ENCODE measurements at regions of chr16 and their contacts with region 1.

Region 1: GRCh38 chr16:53054670-53055485 is at the start of gene CHD9:
- DNase-seq: peak; percentile 71
- H3K4me3 Mint-ChIP-seq: peak within 1 kb of the TSS; percentile 89
- H3K27ac Mint-ChIP-seq: peak within 1 kb of the TSS; percentile 84
- H3K4me1 Mint-ChIP-seq: peaks cover 25% of the 10 kb centered on the region
- H3K27me3 Mint-ChIP-seq: no peaks in the 10 kb centered on the region
- total RNA-seq, gene CHD9: 17.0 and 18.3 TPM in 2 replicates

Region 2: DNA sequence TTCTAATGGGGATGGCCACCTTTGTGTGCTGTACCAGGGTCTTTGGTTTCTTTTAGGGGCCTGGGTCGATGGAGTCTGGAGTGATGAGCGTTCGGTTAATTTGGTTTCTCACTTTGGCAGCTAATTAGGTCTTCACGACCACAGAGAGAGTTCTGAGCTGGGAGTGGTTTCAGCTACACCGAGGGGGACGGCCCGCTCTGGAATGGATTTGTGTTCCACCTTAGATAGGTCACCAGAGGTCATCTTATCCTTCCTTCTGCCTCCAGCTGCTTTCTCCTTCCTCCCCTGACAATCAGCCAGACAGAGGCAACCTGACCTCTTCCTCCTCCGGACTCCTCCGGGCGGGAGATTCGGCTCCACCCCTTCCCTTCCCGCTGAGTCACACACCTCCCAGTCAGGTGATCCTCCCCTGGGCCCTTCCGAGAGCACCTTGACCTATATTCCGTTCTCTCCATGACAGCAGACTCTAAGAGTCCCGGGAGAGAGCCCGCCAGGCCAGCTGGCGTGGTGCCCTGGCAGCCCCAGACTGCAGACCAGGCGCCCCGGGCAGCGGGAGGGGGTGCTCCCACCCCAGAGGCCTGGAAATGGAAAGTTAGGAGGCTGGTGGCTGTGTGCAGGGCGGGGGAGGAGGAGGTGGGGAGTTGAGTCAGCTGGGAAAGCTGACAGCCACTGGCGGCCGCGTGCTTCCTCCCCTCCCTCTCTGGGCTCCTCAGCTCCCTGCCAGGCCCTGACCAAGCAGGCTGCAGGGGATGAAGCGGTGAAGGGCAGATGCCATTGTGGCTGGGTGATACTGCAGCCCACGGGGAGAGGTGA is 44.6 kb after region 1 on chr16:
- intact Hi-C with region 1: loop called (anchors 2 kb)
- DNase-seq: peak; percentile 52
- H3K4me3 Mint-ChIP-seq: peak overlapping the region; percentile 79
- H3K27ac Mint-ChIP-seq: peak overlapping the region; percentile 93
- H3K4me1 Mint-ChIP-seq: peaks cover 36% of the 10 kb centered on the region
- H3K27me3 Mint-ChIP-seq: no peaks in the 10 kb centered on the region

Region 3: DNA sequence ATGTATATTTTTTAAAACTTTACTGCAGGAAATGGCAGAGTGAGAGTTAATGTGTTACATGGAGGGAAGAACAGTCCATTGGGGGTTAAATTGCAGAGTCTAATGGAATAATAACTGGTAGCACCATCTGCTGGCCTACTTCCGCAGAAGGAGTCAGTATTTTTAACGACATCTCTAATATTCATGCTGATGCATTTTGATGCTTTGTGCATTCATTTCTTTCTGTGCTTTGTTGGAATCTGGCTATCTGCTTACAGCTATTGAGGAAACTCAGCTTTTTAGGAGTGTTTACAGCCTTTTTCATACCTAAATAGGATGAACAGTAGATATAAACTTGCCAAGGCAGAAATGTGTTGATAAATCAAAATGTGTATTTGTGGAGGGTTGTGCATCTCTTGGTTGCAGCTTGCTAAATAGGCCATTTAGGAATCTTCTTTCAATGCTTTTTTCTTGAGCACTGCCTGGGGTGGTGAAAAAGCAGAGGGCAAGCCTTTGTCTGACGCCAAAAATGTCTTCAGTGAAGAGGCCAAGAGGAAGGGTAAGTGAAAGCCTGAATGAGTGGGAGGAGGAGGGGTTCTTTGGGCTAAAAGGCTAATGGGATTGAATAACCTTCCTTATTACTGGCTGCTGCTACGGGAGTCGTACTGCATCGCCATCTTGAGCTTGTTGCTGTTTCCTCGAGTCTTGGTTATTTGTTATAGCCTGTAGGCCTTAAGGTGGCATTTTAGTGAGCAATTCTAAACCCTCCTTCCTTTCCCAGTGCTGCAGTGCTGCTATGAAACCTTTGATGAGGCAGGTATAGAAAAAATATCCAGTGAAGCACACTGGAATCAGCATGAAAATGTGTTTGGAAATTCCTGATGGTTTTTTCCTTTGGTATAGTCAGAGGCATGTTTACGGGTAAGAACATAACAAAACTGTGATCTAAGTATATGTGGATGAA is 153.2 kb after region 1 on chr16:
- intact Hi-C with region 1: loop called (anchors 2 kb)
- DNase-seq: no peak
- H3K4me3 Mint-ChIP-seq: peak overlapping the region; percentile 75
- H3K27ac Mint-ChIP-seq: peak overlapping the region; percentile 76
- H3K4me1 Mint-ChIP-seq: peaks cover 19% of the 10 kb centered on the region
- H3K27me3 Mint-ChIP-seq: no peaks in the 10 kb centered on the region

Region 4: GRCh38 chr16:53372992-53373871 is 318.4 kb after region 1 on chr16:
- intact Hi-C with region 1: loop called (anchors 5 kb)
- DNase-seq: peak; percentile 64
- H3K4me3 Mint-ChIP-seq: peak overlapping the region; percentile 82
- H3K27ac Mint-ChIP-seq: no peak overlapping the region
- H3K4me1 Mint-ChIP-seq: peaks cover 20% of the 10 kb centered on the region
- H3K27me3 Mint-ChIP-seq: peaks cover 28% of the 10 kb centered on the region

Region 5: DNA sequence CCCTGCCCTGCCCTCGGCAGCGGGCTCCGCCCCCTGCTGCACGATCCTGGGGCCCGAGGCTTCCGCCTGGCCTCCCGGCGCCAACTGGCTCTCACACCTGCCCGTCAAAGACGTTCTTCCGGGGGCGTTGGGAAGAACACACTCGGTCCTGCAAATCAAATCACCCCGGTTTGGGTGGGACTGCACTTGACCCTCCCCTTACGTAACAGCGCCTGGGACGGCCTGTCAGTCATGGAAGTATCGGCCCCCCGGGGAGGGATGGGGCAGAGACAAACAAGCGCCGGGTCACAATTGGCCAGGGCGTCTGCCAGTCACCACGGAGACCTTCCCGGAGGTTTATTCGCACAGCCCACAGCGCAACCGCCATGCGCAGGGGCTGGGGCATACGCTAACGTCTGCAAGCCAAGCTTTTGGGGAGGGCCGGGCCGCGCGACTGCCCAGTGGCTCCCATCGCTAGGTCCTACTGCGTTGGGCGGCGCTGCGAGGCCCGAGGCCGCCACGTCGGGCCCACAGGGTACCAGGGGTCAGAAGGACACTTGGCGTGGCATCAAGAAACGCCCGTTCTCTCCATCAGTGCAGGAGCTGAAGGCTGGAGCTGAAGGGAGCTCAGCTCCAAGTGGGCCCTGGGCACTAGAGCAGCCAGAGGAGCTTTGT is 448.5 kb after region 1 on chr16:
- intact Hi-C with region 1: loop called (anchors 1 kb)
- DNase-seq: peak; percentile 100
- H3K4me3 Mint-ChIP-seq: peak overlapping the region; percentile 87
- H3K27ac Mint-ChIP-seq: peak overlapping the region; percentile 93
- H3K4me1 Mint-ChIP-seq: peaks cover 70% of the 10 kb centered on the region
- H3K27me3 Mint-ChIP-seq: no peaks in the 10 kb centered on the region

Region 6: DNA sequence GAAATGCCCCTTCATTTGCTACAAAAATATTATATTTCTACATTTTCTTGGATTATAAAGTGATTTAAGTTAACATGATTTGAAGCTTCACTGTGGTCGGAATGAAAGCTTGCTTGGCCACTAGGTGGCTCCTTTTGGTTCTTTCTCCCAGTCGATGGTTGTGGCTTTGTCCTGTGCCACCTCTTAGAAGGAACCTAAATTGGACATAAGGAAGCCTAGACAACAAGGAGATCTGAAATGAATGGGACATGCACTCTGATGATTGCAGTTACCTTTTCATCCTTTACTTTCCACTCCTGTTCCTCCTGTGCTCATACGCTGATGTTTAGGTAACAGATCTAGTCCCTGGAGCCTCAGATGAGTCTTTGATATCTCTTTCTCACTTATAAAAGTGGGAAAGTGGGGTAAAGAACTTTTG is 688.3 kb after region 1 on chr16:
- intact Hi-C with region 1: loop called (anchors 10 kb)
- DNase-seq: no peak
- H3K4me3 Mint-ChIP-seq: no peak overlapping the region
- H3K27ac Mint-ChIP-seq: no peak overlapping the region
- H3K4me1 Mint-ChIP-seq: peaks cover 31% of the 10 kb centered on the region
- H3K27me3 Mint-ChIP-seq: no peaks in the 10 kb centered on the region